ENCODE measurements at regions of chr7 and their contacts with region 1.

Region 1: GRCh38 chr7:71511361-71511807 is 379.4 kb downstream of the GALNT17 start:
- DNase-seq: no peak
- H3K4me3 ChIP-seq: no peak overlapping the region
- H3K27ac ChIP-seq: no peak overlapping the region
- H3K4me1 ChIP-seq: peaks cover 0 to 15% (median 9%) of the 10 kb centered on the region in 4 donors
- H3K27me3 ChIP-seq: no peaks in the 10 kb centered on the region
- CTCF ChIP-seq: no peak
- EP300 ChIP-seq: no peak
- POLR2A ChIP-seq: no peak

Region 2: DNA sequence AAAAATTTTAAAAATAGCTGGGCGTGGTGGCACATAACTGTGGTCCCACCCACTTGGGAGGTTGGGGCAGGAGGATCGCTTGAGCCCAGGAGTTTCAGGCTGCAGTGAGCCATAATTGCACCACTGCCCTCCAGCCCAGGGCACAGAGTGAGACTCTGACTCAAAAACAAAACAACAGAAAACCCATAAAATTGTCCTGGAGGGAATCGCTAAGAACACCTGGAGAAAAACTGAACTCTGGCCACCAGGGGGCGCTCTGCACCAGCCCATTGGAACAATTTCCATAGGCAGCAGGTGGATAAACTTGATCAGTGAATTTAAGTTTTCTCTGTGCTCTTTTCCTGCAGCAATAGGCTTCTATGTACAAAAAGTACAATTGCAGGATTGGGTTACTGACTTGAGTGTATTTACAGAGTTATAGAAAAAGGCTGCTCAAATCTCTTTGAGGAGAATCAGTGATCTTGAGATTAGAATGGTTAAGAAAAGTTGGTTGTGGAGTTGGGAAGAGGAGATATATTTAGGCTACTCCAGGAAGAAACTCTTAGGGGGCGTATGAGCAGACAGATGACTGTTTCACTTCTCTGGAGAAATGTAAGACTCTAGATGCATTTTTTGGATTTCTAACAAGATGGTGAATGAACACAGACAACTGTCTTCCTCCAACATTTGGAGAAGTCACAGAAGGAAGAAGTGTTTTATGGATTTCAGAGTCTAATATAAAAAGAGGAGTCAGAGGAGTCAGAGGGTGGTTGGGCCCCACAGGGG is 654.3 kb before region 1 on chr7:
- intact Hi-C with region 1: loop called (anchors 10 kb)
- DNase-seq: peak; percentile 71
- H3K4me3 ChIP-seq: no peak overlapping the region
- H3K27ac ChIP-seq: no peak overlapping the region
- H3K4me1 ChIP-seq: no peaks in the 10 kb centered on the region
- H3K27me3 ChIP-seq: no peaks in the 10 kb centered on the region
- CTCF ChIP-seq: peak; percentile 50 to 92 (median 76)
- EP300 ChIP-seq: no peak
- POLR2A ChIP-seq: no peak

Region 3: GRCh38 chr7:71308096-71308495 is 203.3 kb before region 1 on chr7:
- intact Hi-C with region 1: no loop called
- DNase-seq: peak; percentile 68
- H3K4me3 ChIP-seq: no peak overlapping the region
- H3K27ac ChIP-seq: peak overlapping the region; percentile 56 to 84 (median 78)
- H3K4me1 ChIP-seq: peaks cover 0 to 56% (median 38%) of the 10 kb centered on the region in 4 donors
- H3K27me3 ChIP-seq: no peaks in the 10 kb centered on the region
- CTCF ChIP-seq: no peak
- EP300 ChIP-seq: peak in 3 of 4 donors; percentile 19 to 23 (median 20)
- POLR2A ChIP-seq: no peak

Region 4: GRCh38 chr7:71527213-71527612 is 15.8 kb after region 1 on chr7:
- intact Hi-C with region 1: no loop called
- DNase-seq: no peak
- H3K4me3 ChIP-seq: no peak overlapping the region
- H3K27ac ChIP-seq: no peak overlapping the region
- H3K4me1 ChIP-seq: no peaks in the 10 kb centered on the region
- H3K27me3 ChIP-seq: no peaks in the 10 kb centered on the region
- CTCF ChIP-seq: no peak
- EP300 ChIP-seq: no peak
- POLR2A ChIP-seq: no peak

Measured in sigmoid colon (tissue), 7 donors.